Endothelial cell of umbilical vein (primary cell): ENCODE measurements at regions of chr12 and their contacts with region 1.

Region 1: DNA sequence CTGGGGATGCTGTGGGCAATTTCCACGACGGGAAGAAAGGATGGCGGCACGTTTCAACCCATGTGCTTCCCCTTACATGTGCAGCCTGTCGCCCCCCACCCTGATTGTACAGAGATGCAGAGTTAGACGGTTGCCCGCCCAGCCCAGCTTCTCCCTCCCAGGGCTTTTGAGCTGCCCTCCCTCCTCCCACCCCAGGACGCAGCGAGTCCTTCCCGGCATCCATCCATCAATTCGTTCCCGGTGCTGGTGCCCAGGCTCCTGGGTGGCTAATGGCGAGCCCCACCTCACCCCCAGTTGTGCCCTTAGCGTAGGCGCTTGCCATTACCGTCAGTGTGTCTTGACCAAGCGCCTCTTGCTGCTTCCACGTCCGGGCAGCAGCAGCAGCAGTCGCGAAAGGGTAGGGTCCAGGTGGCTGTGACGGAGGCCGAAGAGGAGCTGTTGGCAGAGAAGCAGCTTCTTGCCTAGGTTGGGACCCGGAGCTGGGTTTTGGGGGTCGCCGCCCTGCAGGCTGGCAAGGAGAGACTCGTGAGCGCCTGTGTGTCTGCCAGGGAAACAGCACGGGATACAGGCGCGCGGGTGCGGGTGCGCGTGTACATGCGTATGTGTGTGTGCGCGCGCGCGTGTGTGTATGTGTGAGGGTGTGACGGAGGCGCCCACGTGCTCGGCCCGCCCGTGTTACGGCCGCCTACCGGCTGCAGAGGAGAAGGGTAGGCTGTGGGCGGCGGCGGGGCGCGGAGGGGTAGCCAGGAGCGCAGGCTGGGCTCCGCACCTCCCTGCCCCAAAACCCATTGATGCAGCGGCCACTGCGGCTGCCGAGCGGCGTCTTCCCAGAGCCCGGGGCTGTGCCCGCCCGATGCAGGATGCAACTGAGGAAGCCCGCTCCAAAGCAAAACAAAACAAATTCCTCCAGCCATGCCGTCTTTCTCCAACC is at the start of gene SLC6A15:
- DNase-seq: peak; percentile 27
- H3K4me3 ChIP-seq: peak within 1 kb of the TSS; percentile 40 to 71 (median 70)
- H3K27ac ChIP-seq: no peak within 1 kb of the TSS
- H3K4me1 ChIP-seq: peaks cover 23% of the 10 kb centered on the region
- H3K27me3 ChIP-seq: peaks cover 19 to 34% of the 10 kb centered on the region in 2 experiments
- CTCF ChIP-seq: peak; percentile 42 to 51
- POLR2A ChIP-seq: no peak
- total RNA-seq, gene SLC6A15: 0.24 and 1.1 TPM in 2 replicates

Region 2: GRCh38 chr12:84814664-84815245 is 97.7 kb before region 1 on chr12:
- CTCF ChIA-PET with region 1: no interaction called
- POLR2A ChIA-PET with region 1: no interaction called
- dilution Hi-C with region 1: no loop called
- intact Hi-C with region 1: no loop called
- DNase-seq: no peak
- H3K4me3 ChIP-seq: no peak overlapping the region
- H3K27ac ChIP-seq: no peak overlapping the region
- H3K4me1 ChIP-seq: no peaks in the 10 kb centered on the region
- H3K27me3 ChIP-seq: no peaks in the 10 kb centered on the region
- CTCF ChIP-seq: no peak
- POLR2A ChIP-seq: no peak

Region 3: GRCh38 chr12:85036241-85036707 is 123.8 kb after region 1 on chr12 and contains the starts of genes LRRIQ1 and TSPAN19:
- CTCF ChIA-PET with region 1: interaction called, 43 read pairs
- POLR2A ChIA-PET with region 1: no interaction called
- dilution Hi-C with region 1: no loop called
- intact Hi-C with region 1: loop called (anchors 1 kb)
- DNase-seq: peak; percentile 84
- H3K4me3 ChIP-seq: peak within 1 kb of the TSS; percentile 31 to 80 (median 77)
- H3K27ac ChIP-seq: no peak within 1 kb of the TSS
- H3K4me1 ChIP-seq: peaks cover 5% of the 10 kb centered on the region
- H3K27me3 ChIP-seq: peaks cover 6 to 29% of the 10 kb centered on the region in 2 experiments
- CTCF ChIP-seq: no peak
- POLR2A ChIP-seq: no peak
- total RNA-seq, gene LRRIQ1: 0.20 and 0.21 TPM in 2 replicates
- total RNA-seq, gene TSPAN19: not detected in 2 replicates